Ascending aorta (tissue), 2 donors: ENCODE measurements at regions of chr6 and their contacts with region 1.

Region 1: DNA sequence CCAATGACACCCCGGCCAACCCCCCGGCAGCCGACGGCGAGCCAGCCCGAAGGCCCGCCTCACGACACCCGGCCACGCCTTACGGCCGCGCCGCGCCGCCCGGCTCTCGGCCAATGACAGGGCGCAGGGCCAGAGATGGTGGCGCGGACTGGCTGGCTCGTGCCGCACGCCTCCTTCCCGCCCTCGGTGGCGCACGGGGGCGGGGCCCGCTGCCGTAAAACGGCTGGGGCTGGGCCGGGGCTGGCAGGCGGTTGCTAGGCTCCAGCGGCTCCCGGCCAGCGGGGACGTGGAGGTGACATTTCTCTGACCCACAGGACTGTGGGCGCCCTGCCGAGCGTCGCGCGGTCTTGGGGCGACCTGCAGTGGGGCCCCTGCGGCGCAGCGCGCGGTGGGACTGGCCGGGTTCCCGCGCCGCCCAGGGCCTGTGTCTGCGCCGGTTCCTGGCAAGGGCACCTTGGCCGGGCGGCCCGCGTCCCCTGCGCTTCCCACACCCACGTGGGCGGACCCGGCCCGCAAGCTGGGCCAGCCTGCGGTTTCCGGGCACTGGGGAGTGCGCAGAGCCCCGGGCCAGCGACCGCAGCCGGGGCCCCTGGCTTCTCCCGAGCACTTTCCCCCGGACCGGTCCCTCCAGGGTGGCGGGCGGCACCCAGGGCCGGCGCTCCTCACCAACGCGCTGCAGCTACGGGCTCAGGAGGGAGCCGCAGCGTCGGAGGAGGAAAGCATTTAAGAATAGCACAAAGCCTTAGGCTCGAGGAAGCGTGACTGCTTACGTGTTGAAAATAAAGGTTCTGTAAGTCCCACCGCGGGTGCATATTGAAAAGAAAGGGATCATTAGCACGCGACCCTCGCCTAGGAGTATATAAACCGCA is at the start of gene MPC1:
- DNase-seq: peak; percentile 89 to 98
- H3K4me3 ChIP-seq: peak within 1 kb of the TSS; percentile 74 to 94
- H3K27ac ChIP-seq: peak within 1 kb of the TSS; percentile 95
- H3K4me1 ChIP-seq: peaks cover 0 to 18% of the 10 kb centered on the region in 2 donors
- H3K27me3 ChIP-seq: no peaks in the 10 kb centered on the region
- CTCF ChIP-seq: no peak
- total RNA-seq, gene MPC1: 23.8 TPM

Region 2: DNA sequence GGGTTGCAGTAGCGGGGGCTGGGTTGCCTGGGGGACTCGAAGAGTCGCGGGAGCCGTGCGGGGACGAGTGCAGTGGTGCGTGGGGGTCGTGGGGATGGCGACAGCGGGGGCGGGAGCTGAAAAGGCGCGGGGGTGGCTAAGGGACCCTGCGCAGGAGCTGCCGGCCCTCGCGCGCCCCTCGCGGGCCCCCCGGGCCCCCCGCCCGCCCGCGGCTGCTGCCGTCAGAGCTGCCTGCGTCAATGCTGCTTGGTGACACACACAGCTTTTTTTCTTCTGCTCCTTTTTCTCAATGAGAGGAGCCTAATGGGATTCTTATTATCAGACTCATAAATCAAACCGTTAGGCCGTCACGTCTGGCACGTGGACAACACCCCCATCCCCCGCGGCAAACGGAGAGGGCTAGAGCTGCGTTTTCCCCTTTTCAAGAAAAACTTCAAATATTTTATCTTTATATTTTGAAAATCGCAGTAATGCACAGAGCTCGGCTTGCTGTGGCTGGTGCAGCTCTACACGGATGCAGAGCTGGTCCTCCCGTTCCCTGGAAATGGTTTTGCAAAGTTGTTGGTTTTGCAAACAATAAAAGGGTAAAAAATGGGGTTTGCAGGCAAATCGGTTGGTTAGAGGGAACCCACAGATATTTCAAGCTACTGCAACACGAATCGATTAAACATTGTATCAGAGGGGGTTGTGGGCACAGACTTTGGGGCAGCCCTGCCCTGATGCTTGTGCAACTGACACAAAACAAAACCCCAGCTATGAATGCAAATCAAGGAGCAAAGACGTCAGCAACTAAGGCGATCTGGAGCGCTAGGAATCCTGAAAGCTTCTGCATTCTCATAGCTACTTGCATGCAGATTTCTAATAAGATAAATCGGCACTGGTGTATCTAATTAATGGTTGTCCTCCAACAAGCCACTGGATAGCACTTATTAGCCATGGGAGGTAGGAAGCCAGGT is 376.9 kb before region 1 on chr6:
- intact Hi-C with region 1: loop called (anchors 10 kb)
- DNase-seq: peak in 1 of 2 donors; percentile 67
- H3K4me3 ChIP-seq: peak overlapping the region; percentile 46 to 63
- H3K27ac ChIP-seq: peak overlapping the region; percentile 46 to 53
- H3K4me1 ChIP-seq: peaks cover 5 to 9% of the 10 kb centered on the region in 2 donors
- H3K27me3 ChIP-seq: peaks cover 5% of the 10 kb centered on the region
- CTCF ChIP-seq: no peak

Region 3: DNA sequence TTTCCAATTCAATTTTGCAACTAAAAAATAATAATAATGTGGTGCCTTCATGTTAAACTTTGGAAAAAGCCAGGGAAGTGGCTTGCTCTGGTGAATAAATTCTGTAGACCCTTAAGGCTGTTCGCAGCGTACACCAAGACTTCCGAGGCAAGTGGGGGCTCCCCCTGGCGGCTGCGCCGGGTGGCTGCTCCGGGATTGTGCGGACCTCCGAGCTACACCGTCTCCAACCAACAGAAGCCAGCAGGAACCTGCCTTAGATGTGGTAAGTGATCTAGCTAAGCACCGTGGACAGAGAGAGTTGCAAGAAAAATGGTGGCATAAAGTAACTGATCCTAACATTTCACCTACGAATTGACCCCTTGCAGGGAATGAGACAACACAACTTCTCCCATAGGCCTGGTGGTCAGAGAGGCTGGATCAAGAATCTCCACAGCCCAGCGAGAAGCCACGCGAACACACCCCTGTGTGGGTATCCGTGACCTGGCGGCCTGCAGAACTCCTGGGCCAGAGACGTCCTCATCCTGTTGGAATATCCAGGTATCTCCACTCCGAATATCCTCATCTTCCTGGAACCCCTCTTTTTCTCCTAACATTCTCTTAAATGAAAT is 285.1 kb before region 1 on chr6:
- intact Hi-C with region 1: no loop called
- DNase-seq: peak in 1 of 2 donors; percentile 71
- H3K4me3 ChIP-seq: peak overlapping the region in 1 of 2 donors; percentile 4
- H3K27ac ChIP-seq: no peak overlapping the region
- H3K4me1 ChIP-seq: no peaks in the 10 kb centered on the region
- H3K27me3 ChIP-seq: no peaks in the 10 kb centered on the region
- CTCF ChIP-seq: peak; percentile 9 to 47 (median 36)

Region 4: DNA sequence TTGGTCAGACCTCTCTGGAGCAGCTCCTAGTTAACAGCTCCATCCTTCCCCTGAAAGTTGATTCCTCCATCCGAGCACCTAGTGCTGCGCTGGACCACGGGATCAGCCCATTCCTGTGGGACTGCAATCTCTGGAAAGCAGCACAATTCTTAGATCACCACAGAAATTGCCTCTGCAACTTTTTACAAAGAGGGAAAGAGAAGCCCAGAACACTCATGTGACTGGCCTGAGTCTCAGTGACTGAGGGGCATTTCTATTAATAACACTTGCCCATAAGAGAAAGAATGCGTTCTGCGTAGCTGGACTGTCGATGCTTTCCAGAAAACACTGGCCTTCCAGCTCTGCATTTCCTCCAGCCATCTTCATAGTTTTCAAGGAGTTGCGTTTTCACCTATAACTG is 18.7 kb before region 1 on chr6:
- intact Hi-C with region 1: loop called (anchors 1 kb)
- DNase-seq: peak; percentile 20 to 81
- H3K4me3 ChIP-seq: peak overlapping the region in 1 of 2 donors; percentile 40
- H3K27ac ChIP-seq: peak overlapping the region; percentile 81
- H3K4me1 ChIP-seq: peaks cover 0 to 9% of the 10 kb centered on the region in 2 donors
- H3K27me3 ChIP-seq: no peaks in the 10 kb centered on the region
- CTCF ChIP-seq: no peak

Region 5: GRCh38 chr6:166556871-166557322 is 173.7 kb after region 1 on chr6:
- intact Hi-C with region 1: loop called (anchors 2 kb)
- DNase-seq: peak; percentile 96 to 97
- H3K4me3 ChIP-seq: peak overlapping the region in 1 of 2 donors; percentile 44
- H3K27ac ChIP-seq: peak overlapping the region; percentile 77 to 80
- H3K4me1 ChIP-seq: peaks cover 11 to 13% of the 10 kb centered on the region in 2 donors
- H3K27me3 ChIP-seq: no peaks in the 10 kb centered on the region
- CTCF ChIP-seq: no peak

Region 6: DNA sequence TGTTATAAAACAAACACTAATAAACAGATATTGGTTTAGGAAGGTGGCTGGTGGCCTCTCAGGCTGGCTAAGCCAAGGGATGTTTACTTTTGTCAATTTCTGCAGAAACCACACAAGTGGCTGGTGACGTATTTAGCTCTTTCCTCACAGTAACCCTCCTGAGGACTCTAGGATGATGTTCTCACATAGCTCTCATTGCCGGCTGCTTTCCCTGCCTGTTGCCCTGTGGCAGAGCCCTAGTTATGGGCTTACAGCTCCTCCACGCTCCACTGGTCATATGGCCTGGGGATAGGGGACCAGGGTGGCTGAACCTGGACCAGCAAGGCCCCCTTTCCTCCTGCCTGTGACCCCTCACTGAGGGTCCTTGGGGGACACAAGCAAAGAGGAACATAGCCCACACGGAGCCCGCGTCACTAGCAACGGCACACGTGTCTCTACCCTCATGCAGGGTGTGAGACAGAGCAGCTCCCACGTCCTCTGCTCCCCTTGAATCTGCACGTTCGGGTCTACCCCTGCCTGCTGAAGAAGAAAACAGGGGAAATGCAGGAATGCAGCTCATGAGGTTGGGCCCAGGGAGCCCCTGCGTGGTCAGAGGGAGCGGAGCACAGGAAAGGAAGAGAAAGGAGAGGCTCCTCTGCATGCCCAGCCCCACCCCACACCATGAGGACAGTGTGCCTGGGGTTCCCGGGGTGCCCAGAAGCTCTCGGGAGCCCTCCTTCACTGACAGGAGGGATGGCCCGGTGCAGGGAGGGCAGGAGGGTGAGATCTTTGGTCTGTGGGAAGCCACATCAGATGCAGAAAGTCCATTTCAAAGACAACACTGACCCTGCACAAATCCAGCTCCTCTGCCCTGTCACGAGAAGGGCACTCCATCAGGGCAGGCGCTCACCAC is 189.4 kb after region 1 on chr6:
- intact Hi-C with region 1: no loop called
- DNase-seq: no peak
- H3K4me3 ChIP-seq: no peak overlapping the region
- H3K27ac ChIP-seq: no peak overlapping the region
- H3K4me1 ChIP-seq: peaks cover 0 to 5% of the 10 kb centered on the region in 2 donors
- H3K27me3 ChIP-seq: no peaks in the 10 kb centered on the region
- CTCF ChIP-seq: no peak

Region 7: GRCh38 chr6:166586424-166587156 is 203.4 kb after region 1 on chr6 and contains the start of gene RAMACL:
- intact Hi-C with region 1: no loop called
- DNase-seq: no peak
- H3K4me3 ChIP-seq: no peak within 1 kb of the TSS
- H3K27ac ChIP-seq: no peak within 1 kb of the TSS
- H3K4me1 ChIP-seq: no peaks in the 10 kb centered on the region
- H3K27me3 ChIP-seq: no peaks in the 10 kb centered on the region
- CTCF ChIP-seq: no peak
- total RNA-seq, gene RAMACL: not detected

Region 8: GRCh38 chr6:166999145-166999883 is 616.1 kb after region 1 on chr6 and contains the start of gene CEP43:
- intact Hi-C with region 1: loop called (anchors 2 kb)
- DNase-seq: peak; percentile 77 to 96
- H3K4me3 ChIP-seq: peak within 1 kb of the TSS; percentile 72 to 96
- H3K27ac ChIP-seq: peak within 1 kb of the TSS; percentile 24 to 52
- H3K4me1 ChIP-seq: peaks cover 7 to 12% of the 10 kb centered on the region in 2 donors
- H3K27me3 ChIP-seq: no peaks in the 10 kb centered on the region
- CTCF ChIP-seq: no peak
- total RNA-seq, gene CEP43: 10.7 TPM